Activated B cell treated with CpG ODN at 0.5 μM for 24 hours (primary cell): ENCODE measurements at regions of chr11 and their contacts with region 1.

Region 1: GRCh38 chr11:110130642-110131238 is 37.5 kb downstream of the ZC3H12C start:
- DNase-seq: no peak
- ATAC-seq: no peak
- H3K4me3 Mint-ChIP-seq: no peak overlapping the region
- H3K27ac Mint-ChIP-seq: no peak overlapping the region
- H3K4me1 Mint-ChIP-seq: no peaks in the 10 kb centered on the region
- H3K27me3 Mint-ChIP-seq: peaks cover 7% of the 10 kb centered on the region
- CTCF ChIP-seq: no peak

Region 2: GRCh38 chr11:110621826-110622225 is 491.1 kb after region 1 on chr11:
- CTCF ChIA-PET with region 1: no interaction called
- POLR2A ChIA-PET with region 1: interaction called, 12 read pairs
- intact Hi-C with region 1: no loop called
- DNase-seq: no peak
- ATAC-seq: no peak
- H3K4me3 Mint-ChIP-seq: no peak overlapping the region
- H3K27ac Mint-ChIP-seq: no peak overlapping the region
- H3K4me1 Mint-ChIP-seq: no peaks in the 10 kb centered on the region
- H3K27me3 Mint-ChIP-seq: peaks cover 6% of the 10 kb centered on the region
- CTCF ChIP-seq: no peak